ENCODE measurements at regions of chr15 and their contacts with region 1.

Region 1: DNA sequence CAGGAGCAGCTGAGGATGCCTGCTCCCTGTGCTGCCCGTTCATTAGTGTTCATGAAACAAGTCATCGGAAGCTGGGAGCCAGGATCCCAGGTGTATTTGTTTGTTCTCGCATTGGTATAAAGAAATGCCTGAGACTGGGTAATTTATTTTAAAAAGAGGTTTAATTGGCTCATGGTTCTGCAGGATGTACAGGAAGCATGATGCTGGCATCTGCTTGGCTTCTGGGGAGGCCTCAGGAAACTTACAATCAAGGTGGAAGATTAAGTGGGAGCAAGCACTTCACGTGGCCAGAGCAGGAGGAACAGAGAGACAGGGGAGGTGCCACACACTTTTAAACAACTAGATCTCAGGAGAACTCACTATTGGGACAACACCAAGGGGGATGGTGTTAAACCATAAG is 5.5 kb upstream of the HYKK start:
- DNase-seq: no peak
- H3K4me3 ChIP-seq: no peak overlapping the region
- H3K4me3 Mint-ChIP-seq: no peak overlapping the region
- H3K27ac ChIP-seq: no peak overlapping the region
- H3K27ac Mint-ChIP-seq: no peak overlapping the region
- H3K4me1 ChIP-seq: peaks cover 1 to 3% of the 10 kb centered on the region in 2 donors
- H3K4me1 Mint-ChIP-seq: peaks cover 4% of the 10 kb centered on the region
- H3K27me3 ChIP-seq: peaks cover 5 to 12% of the 10 kb centered on the region in 2 donors
- H3K27me3 Mint-ChIP-seq: peaks cover 9 to 21% (median 15%) of the 10 kb centered on the region in 3 donors
- CTCF ChIP-seq: no peak

Region 2: DNA sequence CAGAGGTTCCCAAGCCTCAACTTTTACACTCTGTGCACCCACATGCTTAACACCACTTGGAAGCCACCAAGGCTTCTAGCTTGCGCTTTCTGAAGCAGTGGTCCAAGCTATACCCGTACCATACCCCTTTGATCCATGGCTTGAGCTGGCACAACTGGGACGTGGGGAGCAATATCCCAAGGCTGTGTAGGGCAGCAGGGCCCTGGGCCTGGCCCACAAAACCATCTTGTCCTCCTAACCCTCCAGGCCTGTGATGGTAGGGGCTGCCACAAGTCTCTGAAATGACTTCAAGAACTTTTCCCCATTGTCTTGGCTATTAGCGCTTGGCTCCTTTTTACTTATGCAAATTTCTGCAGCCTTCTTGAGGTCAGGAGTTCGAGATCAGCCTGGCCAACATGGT is 22.4 kb after region 1 on chr15:
- intact Hi-C with region 1: loop called in 1 of 2 experiments (anchors 2 kb)
- DNase-seq: no peak
- H3K4me3 ChIP-seq: no peak overlapping the region
- H3K4me3 Mint-ChIP-seq: no peak overlapping the region
- H3K27ac ChIP-seq: no peak overlapping the region
- H3K27ac Mint-ChIP-seq: peak overlapping the region in 1 of 7 donors; percentile 38
- H3K4me1 ChIP-seq: no peaks in the 10 kb centered on the region
- H3K4me1 Mint-ChIP-seq: no peaks in the 10 kb centered on the region
- H3K27me3 ChIP-seq: no peaks in the 10 kb centered on the region
- H3K27me3 Mint-ChIP-seq: peaks cover 0 to 7% (median 2%) of the 10 kb centered on the region in 3 donors
- CTCF ChIP-seq: no peak